H1 (cell line): ENCODE measurements at regions of chr1 and their contacts with region 1.

Region 1: GRCh38 chr1:2525920-2526823 is at the start of gene PANK4:
- DNase-seq: peak; percentile 66 to 88
- H3K4me3 ChIP-seq: peak within 1 kb of the TSS; percentile 51 to 94 (median 90)
- H3K27ac ChIP-seq: peak within 1 kb of the TSS; percentile 60; the same call in 1 of the 2 replicates
- H3K4me1 ChIP-seq: peaks cover 0 to 40% (median 21%) of the 10 kb centered on the region in 4 experiments; a peak in 6 of 7 replicates
- H3K27me3 ChIP-seq: peaks cover 22 to 45% (median 42%) of the 10 kb centered on the region in 4 experiments
- CTCF ChIP-seq: no peak
- EP300 ChIP-seq: no peak
- POLR2A ChIP-seq: peak in 1 of 2 experiments; percentile 88; a peak in 2 of 3 replicates
- RAD21 ChIP-seq: no peak; a peak in 1 of 4 replicates
- total RNA-seq, gene PANK4: 29.7 and 35.4 TPM in 2 replicates

Region 2: DNA sequence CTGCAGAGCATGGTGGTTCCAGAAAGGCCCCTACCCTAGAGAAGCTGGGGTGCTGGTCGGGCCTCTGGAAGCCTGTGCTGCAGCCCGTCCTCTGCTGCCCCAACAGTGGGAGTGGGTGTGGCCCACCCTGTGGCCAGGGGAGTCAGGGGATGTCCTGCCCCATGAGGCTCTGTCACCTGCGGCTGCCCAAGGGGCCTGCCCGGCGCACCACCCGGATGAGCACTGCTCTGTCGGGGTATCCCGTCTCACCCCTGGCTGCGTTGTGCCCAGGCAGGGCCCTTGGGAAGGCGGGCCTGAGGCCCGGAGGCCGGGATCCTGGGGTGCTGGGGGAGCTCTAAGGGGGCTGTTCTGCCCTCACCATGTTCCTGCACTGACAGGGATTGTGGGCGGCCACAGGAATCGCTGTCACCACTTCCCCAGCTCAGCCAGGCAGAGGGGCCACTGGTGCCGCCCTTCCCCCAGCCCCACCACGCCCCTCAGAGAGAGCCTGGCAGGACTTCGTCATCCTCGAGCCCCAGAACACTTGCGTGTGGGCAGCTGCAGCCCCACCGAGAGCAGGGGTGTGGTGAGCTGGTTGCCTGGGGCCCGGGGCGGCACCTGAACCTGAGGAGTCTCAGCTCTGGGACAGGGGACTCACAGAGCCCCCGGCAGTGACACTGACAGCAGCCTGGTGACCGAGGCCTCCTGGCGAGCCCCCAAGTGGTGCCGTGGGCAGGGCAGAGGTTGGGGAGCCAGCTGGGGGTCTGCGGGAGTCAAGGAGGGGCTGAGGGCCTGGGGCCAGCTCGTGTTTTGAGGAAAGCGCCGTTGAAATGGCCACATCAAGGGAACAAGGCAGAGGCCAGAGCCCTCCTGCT is 19.9 kb before region 1 on chr1:
- CTCF ChIA-PET with region 1: interaction called, 9 read pairs
- POLR2A ChIA-PET with region 1: interaction called, 11 read pairs
- DNase-seq: no peak
- H3K4me3 ChIP-seq: no peak overlapping the region
- H3K27ac ChIP-seq: no peak overlapping the region
- H3K4me1 ChIP-seq: no peaks in the 10 kb centered on the region; a peak in 1 of 7 replicates
- H3K27me3 ChIP-seq: no peaks in the 10 kb centered on the region; a peak in 2 of 7 replicates
- CTCF ChIP-seq: no peak
- EP300 ChIP-seq: no peak
- POLR2A ChIP-seq: no peak
- RAD21 ChIP-seq: no peak

Region 3: DNA sequence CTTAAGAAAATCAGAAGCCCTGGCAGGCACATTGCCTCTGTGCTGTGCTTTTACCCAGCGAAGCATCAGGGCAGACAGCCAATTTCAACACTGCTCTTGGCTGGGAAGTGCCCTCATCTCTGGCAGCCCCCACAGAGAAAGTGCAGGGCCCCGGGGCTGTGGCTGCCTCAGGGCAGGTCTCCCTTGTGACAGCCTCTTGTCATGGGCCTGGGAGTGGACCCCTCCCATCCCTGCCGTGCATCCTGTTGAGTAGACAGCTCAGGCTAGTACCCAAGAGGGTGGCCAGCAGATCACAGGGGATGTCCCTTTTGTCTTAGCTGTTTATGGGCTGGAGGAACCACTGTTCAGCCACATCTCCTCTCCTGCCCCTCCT is 252.0 kb after region 1 on chr1:
- CTCF ChIA-PET with region 1: no interaction called
- POLR2A ChIA-PET with region 1: no interaction called
- DNase-seq: no peak
- H3K4me3 ChIP-seq: no peak overlapping the region
- H3K27ac ChIP-seq: no peak overlapping the region
- H3K4me1 ChIP-seq: no peaks in the 10 kb centered on the region
- H3K27me3 ChIP-seq: no peaks in the 10 kb centered on the region
- CTCF ChIP-seq: no peak
- EP300 ChIP-seq: no peak
- POLR2A ChIP-seq: no peak
- RAD21 ChIP-seq: no peak